SK-N-SH (cell line): ENCODE measurements at regions of chr20 and their contacts with region 1.

Region 1: GRCh38 chr20:50987592-50988210 is 29.1 kb downstream of the MOCS3 start:
- DNase-seq: peak; percentile 79
- H3K4me3 ChIP-seq: no peak overlapping the region; a peak in 1 of 4 replicates
- H3K27ac ChIP-seq: peak overlapping the region in 1 of 2 experiments; percentile 32; a peak in 1 of 4 replicates
- H3K4me1 ChIP-seq: no peaks in the 10 kb centered on the region
- H3K27me3 ChIP-seq: no peaks in the 10 kb centered on the region
- CTCF ChIP-seq: peak; percentile 85
- EP300 ChIP-seq: no peak
- RAD21 ChIP-seq: peak; percentile 99

Region 2: GRCh38 chr20:50967586-50967985 is 20.1 kb before region 1 on chr20:
- CTCF ChIA-PET with region 1: interaction called, 25 read pairs
- POLR2A ChIA-PET with region 1: no interaction called
- DNase-seq: no peak
- H3K4me3 ChIP-seq: no peak overlapping the region
- H3K27ac ChIP-seq: no peak overlapping the region
- H3K4me1 ChIP-seq: no peaks in the 10 kb centered on the region
- H3K27me3 ChIP-seq: no peaks in the 10 kb centered on the region
- CTCF ChIP-seq: no peak
- EP300 ChIP-seq: no peak
- RAD21 ChIP-seq: no peak

Region 3: GRCh38 chr20:51128198-51128597 is 140.5 kb after region 1 on chr20:
- CTCF ChIA-PET with region 1: interaction called, 18 read pairs
- POLR2A ChIA-PET with region 1: no interaction called
- DNase-seq: no peak
- H3K4me3 ChIP-seq: no peak overlapping the region
- H3K27ac ChIP-seq: peak overlapping the region; percentile 26 to 99; a peak in 3 of 4 replicates
- H3K4me1 ChIP-seq: peaks cover 16 to 65% of the 10 kb centered on the region in 2 experiments; a peak in 3 of 4 replicates
- H3K27me3 ChIP-seq: no peaks in the 10 kb centered on the region
- CTCF ChIP-seq: no peak
- EP300 ChIP-seq: no peak
- RAD21 ChIP-seq: no peak

Region 4: GRCh38 chr20:51244486-51244885 is 256.8 kb after region 1 on chr20:
- CTCF ChIA-PET with region 1: no interaction called
- POLR2A ChIA-PET with region 1: no interaction called
- DNase-seq: no peak
- H3K4me3 ChIP-seq: no peak overlapping the region
- H3K27ac ChIP-seq: no peak overlapping the region
- H3K4me1 ChIP-seq: peaks cover 0 to 5% of the 10 kb centered on the region in 2 experiments; a peak in 1 of 4 replicates
- H3K27me3 ChIP-seq: no peaks in the 10 kb centered on the region; the same call in 1 of the 2 replicates
- CTCF ChIP-seq: no peak
- EP300 ChIP-seq: no peak
- RAD21 ChIP-seq: no peak

Region 5: DNA sequence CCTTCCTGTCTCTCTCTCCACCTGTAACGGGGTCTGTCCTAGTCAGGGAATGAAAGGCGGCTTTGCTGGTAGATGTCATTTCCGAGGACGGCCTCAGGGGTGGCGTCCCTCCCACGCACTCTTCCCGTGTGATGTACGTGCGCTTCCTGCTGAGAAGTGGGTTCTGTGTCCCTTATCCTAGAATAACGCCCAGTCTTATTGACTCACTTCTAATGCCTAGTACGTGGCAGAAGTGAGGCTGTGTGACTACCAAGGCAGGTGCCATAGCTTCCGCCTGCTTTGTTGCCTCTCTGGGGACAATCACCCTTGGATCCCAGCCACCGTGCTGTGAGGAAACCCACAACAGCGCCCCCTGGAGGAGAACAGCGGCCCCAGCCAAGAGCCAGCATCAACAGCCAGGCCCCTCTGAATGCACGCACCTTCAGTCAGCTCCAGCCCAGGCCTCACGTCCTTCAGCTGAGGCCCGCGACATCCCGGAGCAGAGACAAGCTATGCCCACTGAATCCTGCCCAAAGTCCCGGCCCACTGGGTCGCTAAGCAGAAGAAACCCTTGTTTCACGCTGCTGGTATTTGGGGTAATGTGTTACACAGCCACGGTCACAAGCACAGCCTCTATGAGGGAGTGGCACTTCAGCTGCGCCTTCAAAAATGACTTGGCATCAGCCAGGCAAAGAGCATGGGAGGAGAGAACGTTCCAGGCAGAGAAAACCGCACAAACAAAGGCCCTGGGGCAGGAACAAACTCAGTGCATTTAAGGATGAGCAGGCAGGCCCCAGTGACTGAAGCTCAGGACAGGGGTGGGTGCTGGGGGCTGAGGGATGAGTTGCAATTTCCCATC is 330.6 kb after region 1 on chr20:
- CTCF ChIA-PET with region 1: interaction called, 169 read pairs
- POLR2A ChIA-PET with region 1: no interaction called
- DNase-seq: peak; percentile 78
- H3K4me3 ChIP-seq: no peak overlapping the region; a peak in 1 of 4 replicates
- H3K27ac ChIP-seq: no peak overlapping the region
- H3K4me1 ChIP-seq: no peaks in the 10 kb centered on the region; a peak in 1 of 4 replicates
- H3K27me3 ChIP-seq: no peaks in the 10 kb centered on the region
- CTCF ChIP-seq: peak; percentile 60
- EP300 ChIP-seq: no peak
- RAD21 ChIP-seq: peak; percentile 53

Region 6: GRCh38 chr20:51340451-51340840 is 352.7 kb after region 1 on chr20:
- CTCF ChIA-PET with region 1: interaction called, 11 read pairs
- POLR2A ChIA-PET with region 1: no interaction called
- DNase-seq: no peak
- H3K4me3 ChIP-seq: no peak overlapping the region
- H3K27ac ChIP-seq: no peak overlapping the region
- H3K4me1 ChIP-seq: peaks cover 3 to 4% of the 10 kb centered on the region in 2 experiments; a peak in 3 of 4 replicates
- H3K27me3 ChIP-seq: no peaks in the 10 kb centered on the region
- CTCF ChIP-seq: no peak
- EP300 ChIP-seq: no peak
- RAD21 ChIP-seq: no peak

Region 7: GRCh38 chr20:51372176-51372803 is 384.6 kb after region 1 on chr20:
- CTCF ChIA-PET with region 1: interaction called, 27 read pairs
- POLR2A ChIA-PET with region 1: no interaction called
- DNase-seq: peak; percentile 86
- H3K4me3 ChIP-seq: no peak overlapping the region
- H3K27ac ChIP-seq: peak overlapping the region in 1 of 2 experiments; percentile 32; a peak in 1 of 4 replicates
- H3K4me1 ChIP-seq: peaks cover 6 to 24% of the 10 kb centered on the region in 2 experiments; a peak in 2 of 4 replicates
- H3K27me3 ChIP-seq: no peaks in the 10 kb centered on the region
- CTCF ChIP-seq: peak; percentile 77
- EP300 ChIP-seq: no peak
- RAD21 ChIP-seq: peak; percentile 93

Region 8: DNA sequence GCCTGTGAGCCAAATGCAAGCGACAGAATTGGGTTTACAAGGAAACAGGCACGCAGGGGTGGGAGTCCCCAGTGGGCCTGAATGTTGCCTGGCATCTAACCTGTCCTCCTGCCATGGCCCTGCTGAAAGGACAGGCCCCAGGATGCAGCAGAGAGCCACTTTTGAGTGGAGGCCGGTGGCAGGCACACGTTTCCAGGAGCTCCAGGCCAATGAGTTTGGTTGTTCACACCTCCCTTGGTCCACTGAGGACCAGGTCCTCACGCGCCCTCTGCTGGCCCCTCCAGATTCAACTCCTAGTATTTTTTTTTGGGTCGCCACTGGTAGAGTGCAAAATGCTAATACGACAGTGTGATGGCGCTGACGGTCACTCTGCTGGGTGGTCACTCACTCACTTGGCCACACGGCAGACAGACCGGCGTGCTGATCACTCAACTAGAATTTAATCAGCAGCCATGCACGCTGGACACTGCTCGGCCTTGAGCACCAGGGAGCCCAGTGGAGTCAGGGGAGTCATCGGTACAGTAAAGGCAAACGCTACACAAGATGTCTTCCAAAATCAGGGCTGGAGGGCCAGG is 636.5 kb after region 1 on chr20:
- CTCF ChIA-PET with region 1: interaction called, 38 read pairs
- POLR2A ChIA-PET with region 1: interaction called, 3 read pairs
- DNase-seq: peak; percentile 77
- H3K4me3 ChIP-seq: no peak overlapping the region
- H3K27ac ChIP-seq: no peak overlapping the region
- H3K4me1 ChIP-seq: 0 out of 4 replicates have a peak, but pooled peaks cover 0 to 4% of the 10 kb centered on the region in 2 experiments
- H3K27me3 ChIP-seq: no peaks in the 10 kb centered on the region
- CTCF ChIP-seq: peak; percentile 73
- EP300 ChIP-seq: no peak
- RAD21 ChIP-seq: peak; percentile 65